ENCODE measurements at regions of chr7 and their contacts with region 1.

Region 1: GRCh38 chr7:23055582-23056178 is 41.8 kb upstream of the HYCC1 start:
- DNase-seq: peak; percentile 83
- H3K4me3 ChIP-seq: no peak overlapping the region
- H3K27ac ChIP-seq: no peak overlapping the region
- H3K4me1 ChIP-seq: peaks cover 5% of the 10 kb centered on the region
- CTCF ChIP-seq: peak; percentile 100

Region 2: DNA sequence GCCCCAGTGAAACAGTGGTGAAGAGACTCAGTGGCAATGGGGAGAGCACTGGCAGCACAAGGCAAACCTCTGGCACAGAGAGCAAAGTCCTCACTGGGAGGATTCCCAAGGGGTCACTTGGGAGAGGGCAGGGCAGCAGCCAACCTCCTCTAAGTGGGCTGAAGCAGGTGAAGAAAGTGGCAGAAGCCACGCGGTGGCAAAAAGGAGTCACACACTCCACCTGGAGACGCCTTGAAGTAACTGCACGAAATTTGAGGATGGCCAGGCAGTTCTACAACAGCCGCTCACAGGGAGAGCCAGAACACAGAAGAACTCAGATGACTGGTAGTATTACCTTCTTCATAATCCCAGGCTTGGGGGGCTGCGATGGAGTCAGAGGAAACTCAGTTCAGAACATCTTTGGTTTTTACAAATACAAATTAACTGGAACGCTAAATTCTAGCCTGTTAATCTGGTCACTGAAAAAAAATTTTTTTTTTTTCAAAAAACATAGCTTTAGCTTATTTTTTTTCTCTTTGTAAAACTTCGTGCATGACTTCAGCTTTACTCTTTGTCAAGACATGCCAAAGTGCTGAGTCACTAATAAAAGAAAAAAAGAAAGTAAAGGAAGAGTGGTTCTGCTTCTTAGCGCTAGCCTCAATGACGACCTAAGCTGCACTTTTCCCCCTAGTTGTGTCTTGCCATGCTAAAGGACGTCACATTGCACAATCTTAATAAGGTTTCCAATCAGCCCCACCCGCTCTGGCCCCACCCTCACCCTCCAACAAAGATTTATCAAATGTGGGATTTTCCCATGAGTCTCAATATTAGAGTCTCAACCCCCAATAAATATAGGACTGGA is 329.1 kb before region 1 on chr7:
- CTCF ChIA-PET with region 1: interaction called, 8 read pairs
- POLR2A ChIA-PET with region 1: interaction called, 3 read pairs
- intact Hi-C with region 1: loop called (anchors 1 kb)
- DNase-seq: peak; percentile 70
- H3K4me3 ChIP-seq: no peak overlapping the region
- H3K27ac ChIP-seq: no peak overlapping the region
- H3K4me1 ChIP-seq: peaks cover 3% of the 10 kb centered on the region
- CTCF ChIP-seq: peak; percentile 82

Region 3: GRCh38 chr7:22822486-22823141 is 233.1 kb before region 1 on chr7 and contains the start of gene TOMM7:
- CTCF ChIA-PET with region 1: interaction called, 3 read pairs
- POLR2A ChIA-PET with region 1: interaction called, 7 read pairs
- intact Hi-C with region 1: loop called (anchors 1 kb)
- DNase-seq: peak; percentile 98
- H3K4me3 ChIP-seq: peak within 1 kb of the TSS; percentile 77
- H3K27ac ChIP-seq: peak within 1 kb of the TSS; percentile 39
- H3K4me1 ChIP-seq: peaks cover 29% of the 10 kb centered on the region
- CTCF ChIP-seq: peak; percentile 51
- total RNA-seq, gene TOMM7: 184 and 195 TPM in 2 replicates

Region 4: GRCh38 chr7:22932896-22933295 is 122.8 kb before region 1 on chr7:
- CTCF ChIA-PET with region 1: no interaction called
- POLR2A ChIA-PET with region 1: no interaction called
- intact Hi-C with region 1: loop called (anchors 1 kb)
- DNase-seq: no peak
- H3K4me3 ChIP-seq: no peak overlapping the region
- H3K27ac ChIP-seq: no peak overlapping the region
- H3K4me1 ChIP-seq: no peaks in the 10 kb centered on the region
- CTCF ChIP-seq: no peak

Region 5: DNA sequence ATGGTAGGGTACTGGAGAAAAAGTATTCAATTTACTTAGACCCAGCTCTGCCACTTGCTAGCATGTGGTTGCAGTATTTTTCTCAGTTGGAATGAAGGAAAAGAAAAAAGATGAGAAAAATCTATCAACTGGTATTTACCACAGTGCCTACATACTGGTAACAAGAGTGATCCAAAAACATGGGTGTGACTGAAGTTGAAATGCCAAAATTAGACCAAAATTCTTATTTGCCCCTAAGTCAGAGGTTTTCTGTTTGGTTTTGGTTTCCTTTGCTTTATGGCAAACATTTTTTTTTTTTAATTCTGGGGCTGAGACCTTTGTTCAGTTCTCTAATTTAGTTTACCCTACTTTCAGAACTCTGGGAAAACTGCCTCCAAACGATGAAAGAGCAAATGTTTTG is 54.1 kb before region 1 on chr7:
- CTCF ChIA-PET with region 1: no interaction called
- POLR2A ChIA-PET with region 1: no interaction called
- intact Hi-C with region 1: no loop called
- DNase-seq: no peak
- H3K4me3 ChIP-seq: no peak overlapping the region
- H3K27ac ChIP-seq: no peak overlapping the region
- H3K4me1 ChIP-seq: peaks cover 58% of the 10 kb centered on the region
- CTCF ChIP-seq: no peak

Region 6: DNA sequence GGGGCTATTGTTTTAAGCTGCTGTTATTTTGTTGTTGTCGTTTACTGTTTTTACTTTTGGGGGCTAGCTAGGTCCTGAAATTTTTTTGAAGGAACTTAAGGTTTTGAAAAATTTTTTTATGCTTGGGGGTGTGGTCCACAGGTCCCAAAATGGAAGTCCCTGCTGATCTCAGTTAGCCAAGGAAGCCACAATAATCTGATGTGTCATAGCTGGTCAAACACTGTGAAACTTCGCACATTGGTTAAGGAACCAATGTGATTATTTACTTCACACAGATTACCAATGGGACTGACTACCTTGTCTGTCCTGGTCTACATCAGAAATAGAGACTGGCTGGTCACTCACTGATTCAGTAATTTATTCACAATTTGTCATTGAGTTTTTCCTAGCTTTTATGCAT is 12.2 kb before region 1 on chr7:
- CTCF ChIA-PET with region 1: interaction called, 4 read pairs
- POLR2A ChIA-PET with region 1: interaction called, 11 read pairs
- intact Hi-C with region 1: no loop called
- DNase-seq: no peak
- H3K4me3 ChIP-seq: no peak overlapping the region
- H3K27ac ChIP-seq: no peak overlapping the region
- H3K4me1 ChIP-seq: no peaks in the 10 kb centered on the region
- CTCF ChIP-seq: no peak

Region 7: GRCh38 chr7:23129036-23129435 is 73.4 kb after region 1 on chr7:
- CTCF ChIA-PET with region 1: no interaction called
- POLR2A ChIA-PET with region 1: no interaction called
- intact Hi-C with region 1: no loop called
- DNase-seq: no peak
- H3K4me3 ChIP-seq: no peak overlapping the region
- H3K27ac ChIP-seq: no peak overlapping the region
- H3K4me1 ChIP-seq: no peaks in the 10 kb centered on the region
- CTCF ChIP-seq: no peak

Region 8: DNA sequence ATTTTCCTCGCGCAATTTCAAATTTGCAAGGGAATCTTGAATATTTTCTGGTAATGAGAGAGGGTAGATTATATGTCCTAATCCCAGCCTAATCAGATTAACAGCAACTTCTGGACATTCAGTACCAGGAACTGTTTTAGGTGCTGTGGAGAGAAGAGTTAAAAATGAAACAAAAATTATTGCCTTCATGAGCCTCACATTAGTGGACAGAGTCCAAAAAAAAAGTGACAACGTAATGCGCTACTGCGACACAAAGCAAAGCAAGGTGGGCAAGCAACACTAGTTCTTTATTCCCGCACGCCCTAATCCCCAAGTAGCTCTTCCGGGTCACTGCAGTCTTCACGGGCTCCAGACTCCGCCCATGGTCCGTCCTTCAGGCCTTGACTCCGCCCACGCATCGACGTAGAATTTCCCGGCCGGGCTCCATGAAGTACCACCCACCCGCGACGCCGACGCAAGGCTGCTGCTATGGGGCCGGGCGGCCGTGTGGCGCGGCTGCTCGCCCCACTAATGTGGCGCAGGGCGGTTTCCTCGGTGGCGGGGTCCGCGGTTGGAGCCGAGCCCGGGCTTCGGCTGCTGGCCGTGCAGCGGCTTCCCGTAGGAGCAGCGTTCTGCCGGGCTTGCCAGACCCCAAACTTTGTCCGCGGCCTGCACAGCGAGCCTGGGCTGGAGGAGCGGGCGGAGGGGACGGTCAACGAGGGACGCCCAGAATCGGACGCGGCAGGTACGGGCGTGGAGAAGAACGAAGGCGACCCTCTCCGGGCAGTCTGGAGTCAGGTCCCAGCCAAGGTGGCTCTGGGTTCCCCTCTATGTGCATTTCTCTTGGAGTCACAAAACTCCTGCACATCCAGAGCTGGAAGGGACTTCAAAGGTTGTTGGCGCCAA is 243.4 kb after region 1 on chr7 and contains the start of gene MALSU1:
- CTCF ChIA-PET with region 1: no interaction called
- POLR2A ChIA-PET with region 1: no interaction called
- intact Hi-C with region 1: no loop called
- DNase-seq: peak; percentile 98
- H3K4me3 ChIP-seq: peak within 1 kb of the TSS; percentile 89
- H3K27ac ChIP-seq: peak within 1 kb of the TSS; percentile 25
- H3K4me1 ChIP-seq: peaks cover 14% of the 10 kb centered on the region
- CTCF ChIP-seq: no peak
- total RNA-seq, gene MALSU1: 107 and 132 TPM in 2 replicates

Measured in OCI-LY7 (cell line).